Activated CD8-positive, alpha-beta memory T cell treated with anti-CD3 and anti-CD28 coated beads, Interleukin-2, amount 10 ng/mL, durations not matched to agents 7 days and 5 days (primary cell): ENCODE measurements at regions of chr16 and their contacts with region 1.

Region 1: GRCh38 chr16:53743149-53743566 is 39.2 kb downstream of the FTO start:
- DNase-seq: no peak
- ATAC-seq: no peak
- H3K4me3 Mint-ChIP-seq: no peak overlapping the region
- H3K27ac Mint-ChIP-seq: no peak overlapping the region
- H3K4me1 Mint-ChIP-seq: peaks cover 26% of the 10 kb centered on the region
- H3K27me3 Mint-ChIP-seq: no peaks in the 10 kb centered on the region

Region 2: GRCh38 chr16:53703590-53704444 is 39.3 kb before region 1 on chr16 and contains the starts of genes FTO and RPGRIP1L:
- CTCF ChIA-PET with region 1: interaction called, 10 read pairs
- DNase-seq: peak; percentile 99
- ATAC-seq: peak; percentile 97
- H3K4me3 Mint-ChIP-seq: peak within 1 kb of the TSS; percentile 93
- H3K27ac Mint-ChIP-seq: peak within 1 kb of the TSS; percentile 95
- H3K4me1 Mint-ChIP-seq: peaks cover 22% of the 10 kb centered on the region
- H3K27me3 Mint-ChIP-seq: no peaks in the 10 kb centered on the region
- total RNA-seq, gene FTO: 47.4 to 57.7 TPM
- total RNA-seq, gene RPGRIP1L: 5.6 to 6.9 TPM

Region 3: DNA sequence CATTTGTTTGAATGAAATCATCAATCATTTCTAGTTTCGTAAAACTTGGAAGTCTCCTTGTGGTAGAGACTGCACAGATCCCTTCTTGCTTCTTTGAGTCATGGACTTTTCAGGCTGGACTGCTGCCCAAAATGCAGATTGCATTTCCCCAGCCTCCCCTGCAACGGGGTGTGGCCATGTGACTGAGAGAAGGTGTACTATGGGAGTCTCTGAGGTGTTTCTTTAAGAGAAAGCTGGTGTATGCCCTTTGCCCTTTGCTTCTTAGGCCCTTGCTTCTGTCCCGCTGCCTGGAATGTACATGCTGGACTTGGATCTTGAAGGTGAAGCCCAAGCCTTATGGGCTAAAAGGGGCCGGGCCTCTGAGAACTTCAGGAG is 12.4 kb after region 1 on chr16:
- CTCF ChIA-PET with region 1: interaction called, 12 read pairs
- DNase-seq: no peak
- ATAC-seq: no peak
- H3K4me3 Mint-ChIP-seq: no peak overlapping the region
- H3K27ac Mint-ChIP-seq: no peak overlapping the region
- H3K4me1 Mint-ChIP-seq: no peaks in the 10 kb centered on the region
- H3K27me3 Mint-ChIP-seq: no peaks in the 10 kb centered on the region